Cardiac septum (tissue), 1 donor: ENCODE measurements at regions of chr20 and their contacts with region 1.

Region 1: GRCh38 chr20:58209652-58210397 is 18.6 kb downstream of the ANKRD60 start:
- DNase-seq: peak; percentile 94

Region 2: GRCh38 chr20:57514273-57514751 is 695.5 kb before region 1 on chr20:
- intact Hi-C with region 1: loop called (anchors 1 kb)
- DNase-seq: peak; percentile 77